PC-9 (cell line): ENCODE measurements at regions of chr1 and their contacts with region 1.

Region 1: GRCh38 chr1:6423321-6423999 is 1.1 kb upstream of the ESPN start:
- DNase-seq: peak; percentile 80 to 94
- H3K4me3 ChIP-seq: no peak overlapping the region
- H3K27ac ChIP-seq: no peak overlapping the region
- H3K4me1 ChIP-seq: peaks cover 22% of the 10 kb centered on the region
- H3K27me3 ChIP-seq: peaks cover 8% of the 10 kb centered on the region; the same call in 1 of the 2 replicates
- CTCF ChIP-seq: peak; percentile 75

Region 2: GRCh38 chr1:6350416-6351088 is 72.9 kb before region 1 on chr1:
- CTCF ChIA-PET with region 1: interaction called, 5 read pairs
- POLR2A ChIA-PET with region 1: no interaction called
- intact Hi-C with region 1: loop called (anchors 5 kb)
- DNase-seq: peak; percentile 64 to 81
- H3K4me3 ChIP-seq: no peak overlapping the region
- H3K27ac ChIP-seq: no peak overlapping the region
- H3K4me1 ChIP-seq: peaks cover 9% of the 10 kb centered on the region; the same call in 1 of the 2 replicates
- H3K27me3 ChIP-seq: no peaks in the 10 kb centered on the region
- CTCF ChIP-seq: no peak

Region 3: GRCh38 chr1:6365047-6365446 is 58.4 kb before region 1 on chr1:
- CTCF ChIA-PET with region 1: interaction called, 10 read pairs
- POLR2A ChIA-PET with region 1: no interaction called
- intact Hi-C with region 1: no loop called
- DNase-seq: peak in 1 of 2 experiments; percentile 29
- H3K4me3 ChIP-seq: no peak overlapping the region
- H3K27ac ChIP-seq: no peak overlapping the region
- H3K4me1 ChIP-seq: 0 out of 2 replicates have a peak, but pooled peaks cover 5% of the 10 kb centered on the region
- H3K27me3 ChIP-seq: no peaks in the 10 kb centered on the region
- CTCF ChIP-seq: no peak

Region 4: DNA sequence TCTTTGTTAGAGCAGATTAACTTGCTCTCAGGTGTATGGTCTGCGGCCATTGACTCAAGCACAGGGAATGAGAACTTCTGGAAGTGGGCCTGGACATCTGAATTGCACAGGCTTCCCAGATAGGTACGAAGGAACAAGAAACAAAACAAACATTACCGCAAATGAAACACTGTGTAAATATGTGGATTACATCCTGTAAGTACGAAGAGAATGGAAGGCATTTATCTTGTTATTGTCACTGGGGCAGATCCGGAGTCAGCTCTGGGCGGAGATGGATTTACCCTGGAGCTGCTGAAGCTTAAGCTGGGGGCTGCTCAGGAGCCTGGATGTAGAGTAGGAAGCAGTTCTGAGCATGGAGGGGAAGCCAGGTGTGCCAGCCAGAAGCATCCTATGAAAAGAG is 10.6 kb before region 1 on chr1:
- CTCF ChIA-PET with region 1: interaction called, 10 read pairs
- POLR2A ChIA-PET with region 1: no interaction called
- intact Hi-C with region 1: loop called (anchors 2 kb)
- DNase-seq: peak; percentile 44 to 79
- H3K4me3 ChIP-seq: no peak overlapping the region
- H3K27ac ChIP-seq: peak overlapping the region; percentile 84
- H3K4me1 ChIP-seq: peaks cover 36% of the 10 kb centered on the region
- H3K27me3 ChIP-seq: no peaks in the 10 kb centered on the region
- CTCF ChIP-seq: no peak

Region 5: DNA sequence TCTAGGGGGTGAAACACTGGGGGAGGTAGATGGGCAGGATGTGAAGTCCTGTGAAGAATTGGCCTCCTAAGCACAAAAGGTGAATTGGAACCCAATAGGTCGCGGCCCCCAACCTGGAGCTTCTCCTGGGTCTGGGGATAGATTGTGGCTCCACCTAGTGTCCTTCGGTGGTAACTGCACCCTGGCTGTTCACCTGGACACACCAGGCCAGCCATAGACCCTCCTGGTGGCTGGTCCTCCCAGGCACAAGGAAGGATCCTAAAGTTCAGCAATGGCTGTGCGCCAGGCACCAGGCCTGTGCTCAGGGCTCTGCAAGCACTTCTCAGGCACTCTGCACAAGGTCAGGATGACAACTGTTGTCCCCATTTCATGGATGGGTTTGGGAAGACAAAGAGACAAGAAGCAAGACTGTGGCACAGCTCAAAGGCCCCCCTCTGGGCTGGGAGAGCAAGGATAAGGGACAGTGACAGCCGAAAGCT is 14.6 kb after region 1 on chr1:
- CTCF ChIA-PET with region 1: interaction called, 18 read pairs
- POLR2A ChIA-PET with region 1: no interaction called
- intact Hi-C with region 1: loop called (anchors 1 kb)
- DNase-seq: peak; percentile 52 to 76
- H3K4me3 ChIP-seq: no peak overlapping the region
- H3K27ac ChIP-seq: no peak overlapping the region
- H3K4me1 ChIP-seq: no peaks in the 10 kb centered on the region
- H3K27me3 ChIP-seq: no peaks in the 10 kb centered on the region
- CTCF ChIP-seq: peak; percentile 89

Region 6: DNA sequence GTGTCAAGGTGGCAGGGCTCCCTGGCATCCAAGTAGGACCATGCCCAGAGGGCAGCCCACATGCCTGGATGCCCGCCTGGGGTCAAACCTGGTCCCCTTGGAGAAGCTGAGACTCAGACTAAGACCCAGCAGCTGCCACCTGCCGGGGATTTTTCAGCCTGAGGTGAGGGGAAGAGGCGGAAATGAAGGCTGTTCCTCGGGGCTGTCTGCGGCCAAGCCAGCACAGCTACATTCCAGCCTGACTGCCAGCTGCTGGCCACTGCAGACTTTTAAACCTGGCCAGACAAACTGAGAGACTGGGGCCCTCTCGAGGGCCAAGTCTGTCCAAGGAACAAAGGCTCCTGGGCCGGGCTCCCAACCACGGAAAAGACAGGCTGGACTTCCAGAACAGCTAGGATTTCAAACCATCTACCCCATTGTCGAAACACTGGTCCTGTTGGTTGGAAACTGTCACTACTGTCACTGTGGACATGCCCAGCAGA is 89.9 kb after region 1 on chr1:
- CTCF ChIA-PET with region 1: no interaction called
- POLR2A ChIA-PET with region 1: interaction called, 12 read pairs
- intact Hi-C with region 1: no loop called
- DNase-seq: peak; percentile 54 to 75
- H3K4me3 ChIP-seq: no peak overlapping the region
- H3K27ac ChIP-seq: no peak overlapping the region
- H3K4me1 ChIP-seq: peaks cover 5% of the 10 kb centered on the region; the same call in 1 of the 2 replicates
- H3K27me3 ChIP-seq: no peaks in the 10 kb centered on the region
- CTCF ChIP-seq: no peak